CD14-positive monocyte (primary cell): ENCODE measurements at regions of chr5 and their contacts with region 1.

Region 1: GRCh38 chr5:142922223-142922952 is 152.2 kb downstream of the ARHGAP26 start:
- DNase-seq: peak in 2 of 3 donors; percentile 37 to 41
- H3K4me3 ChIP-seq: no peak overlapping the region
- H3K4me3 Mint-ChIP-seq: no peak overlapping the region
- H3K27ac ChIP-seq: no peak overlapping the region
- H3K27ac Mint-ChIP-seq: peak overlapping the region in 4 of 7 donors; percentile 28 to 62 (median 51)
- H3K4me1 ChIP-seq: peaks cover 31 to 42% of the 10 kb centered on the region in 2 donors
- H3K4me1 Mint-ChIP-seq: peaks cover 44% of the 10 kb centered on the region
- H3K27me3 ChIP-seq: no peaks in the 10 kb centered on the region
- H3K27me3 Mint-ChIP-seq: peaks cover 0 to 3% (median 0%) of the 10 kb centered on the region in 3 donors
- CTCF ChIP-seq: peak; percentile 63

Region 2: DNA sequence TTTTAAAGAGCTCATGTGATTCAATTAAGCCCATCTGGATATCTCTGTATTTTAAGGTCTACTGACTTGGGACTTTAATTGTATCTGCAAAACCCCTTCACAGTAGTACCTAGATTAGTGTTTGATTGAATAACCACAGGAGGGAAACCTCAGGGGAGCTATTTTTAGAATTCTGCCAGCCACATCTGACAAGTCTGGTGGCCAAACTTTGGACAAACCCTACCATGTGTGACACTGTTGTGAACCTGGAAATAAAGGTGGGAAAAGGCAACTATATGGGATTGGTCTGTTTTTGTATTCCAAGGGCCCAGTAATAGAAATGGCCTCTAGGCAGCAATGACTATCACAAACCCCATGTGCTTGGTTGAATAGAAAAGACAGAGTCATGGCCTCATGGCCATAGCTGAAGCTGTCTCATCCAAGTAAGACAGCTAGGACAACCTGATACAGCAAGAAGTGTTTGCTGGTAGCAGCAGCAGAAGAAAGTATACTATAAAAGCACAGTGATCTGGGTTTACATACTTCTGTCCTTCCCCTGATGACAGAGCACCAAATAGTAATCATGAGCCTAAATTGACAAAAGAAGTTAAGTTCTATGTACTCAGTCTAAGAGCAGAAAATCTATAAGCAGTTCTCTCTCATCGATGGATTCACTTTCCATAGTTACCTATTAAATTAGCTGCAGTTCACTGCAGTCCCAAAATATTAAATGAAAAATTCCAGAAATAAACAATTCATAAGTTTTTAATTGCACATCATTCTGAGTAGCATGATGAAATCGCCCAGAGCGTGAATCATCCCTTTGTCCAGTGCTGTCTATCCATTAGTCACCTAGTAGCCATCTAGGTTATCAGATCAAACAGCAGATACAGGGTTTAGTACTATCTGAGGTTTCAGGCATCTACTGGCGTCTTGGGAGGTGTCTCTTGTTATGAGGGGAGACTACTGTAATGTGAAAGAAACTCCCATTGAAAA is 37.6 kb after region 1 on chr5:
- intact Hi-C with region 1: loop called in 1 of 2 experiments (anchors 5 kb)
- DNase-seq: peak; percentile 51 to 86 (median 84)
- H3K4me3 ChIP-seq: no peak overlapping the region
- H3K4me3 Mint-ChIP-seq: no peak overlapping the region
- H3K27ac ChIP-seq: peak overlapping the region in 1 of 2 donors; percentile 50
- H3K27ac Mint-ChIP-seq: peak overlapping the region; percentile 31 to 81 (median 69)
- H3K4me1 ChIP-seq: peaks cover 0 to 18% of the 10 kb centered on the region in 2 donors
- H3K4me1 Mint-ChIP-seq: peaks cover 32% of the 10 kb centered on the region
- H3K27me3 ChIP-seq: no peaks in the 10 kb centered on the region
- H3K27me3 Mint-ChIP-seq: peaks cover 0 to 4% (median 1%) of the 10 kb centered on the region in 3 donors
- CTCF ChIP-seq: no peak

Region 3: DNA sequence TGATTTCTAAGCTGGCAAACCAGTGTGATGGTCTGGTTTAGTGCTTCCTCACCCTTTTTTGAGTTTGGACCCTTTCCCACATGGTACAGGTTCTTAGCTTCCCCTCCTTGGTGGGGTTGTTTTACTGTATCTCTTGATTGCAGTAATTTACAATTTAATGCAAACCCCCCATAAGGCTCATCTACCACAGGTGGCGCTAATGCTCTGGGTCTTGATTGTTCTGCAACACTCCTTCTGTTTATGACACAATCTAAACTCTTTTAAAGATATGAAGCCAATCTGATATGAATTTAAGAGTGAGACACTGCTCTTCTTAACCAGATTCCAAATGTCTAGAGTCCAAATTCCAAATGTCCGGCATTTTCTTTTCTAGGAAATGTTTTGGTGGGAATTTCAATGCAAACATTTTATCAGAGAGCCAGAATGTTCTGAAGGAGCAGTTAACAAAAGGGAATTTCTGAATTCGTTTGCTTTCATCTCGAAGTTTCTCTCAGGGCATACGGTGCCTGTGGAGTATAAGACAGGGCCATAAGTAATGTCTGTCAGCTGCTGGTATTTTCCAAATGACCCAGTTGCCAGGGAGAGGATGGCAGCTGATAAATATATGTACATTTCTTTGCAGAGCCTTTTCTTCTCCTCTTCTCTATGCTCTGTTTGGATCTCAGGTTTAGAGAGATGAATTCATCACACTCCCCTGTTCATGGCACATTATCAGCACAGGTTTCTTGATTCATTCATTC is 94.6 kb after region 1 on chr5:
- intact Hi-C with region 1: no loop called
- DNase-seq: peak in 1 of 3 donors; percentile 38
- H3K4me3 ChIP-seq: no peak overlapping the region
- H3K4me3 Mint-ChIP-seq: no peak overlapping the region
- H3K27ac ChIP-seq: no peak overlapping the region
- H3K27ac Mint-ChIP-seq: peak overlapping the region in 1 of 7 donors; percentile 26
- H3K4me1 ChIP-seq: no peaks in the 10 kb centered on the region
- H3K4me1 Mint-ChIP-seq: peaks cover 4% of the 10 kb centered on the region
- H3K27me3 ChIP-seq: no peaks in the 10 kb centered on the region
- H3K27me3 Mint-ChIP-seq: peaks cover 0 to 2% (median 0%) of the 10 kb centered on the region in 3 donors
- CTCF ChIP-seq: peak; percentile 49

Region 4: DNA sequence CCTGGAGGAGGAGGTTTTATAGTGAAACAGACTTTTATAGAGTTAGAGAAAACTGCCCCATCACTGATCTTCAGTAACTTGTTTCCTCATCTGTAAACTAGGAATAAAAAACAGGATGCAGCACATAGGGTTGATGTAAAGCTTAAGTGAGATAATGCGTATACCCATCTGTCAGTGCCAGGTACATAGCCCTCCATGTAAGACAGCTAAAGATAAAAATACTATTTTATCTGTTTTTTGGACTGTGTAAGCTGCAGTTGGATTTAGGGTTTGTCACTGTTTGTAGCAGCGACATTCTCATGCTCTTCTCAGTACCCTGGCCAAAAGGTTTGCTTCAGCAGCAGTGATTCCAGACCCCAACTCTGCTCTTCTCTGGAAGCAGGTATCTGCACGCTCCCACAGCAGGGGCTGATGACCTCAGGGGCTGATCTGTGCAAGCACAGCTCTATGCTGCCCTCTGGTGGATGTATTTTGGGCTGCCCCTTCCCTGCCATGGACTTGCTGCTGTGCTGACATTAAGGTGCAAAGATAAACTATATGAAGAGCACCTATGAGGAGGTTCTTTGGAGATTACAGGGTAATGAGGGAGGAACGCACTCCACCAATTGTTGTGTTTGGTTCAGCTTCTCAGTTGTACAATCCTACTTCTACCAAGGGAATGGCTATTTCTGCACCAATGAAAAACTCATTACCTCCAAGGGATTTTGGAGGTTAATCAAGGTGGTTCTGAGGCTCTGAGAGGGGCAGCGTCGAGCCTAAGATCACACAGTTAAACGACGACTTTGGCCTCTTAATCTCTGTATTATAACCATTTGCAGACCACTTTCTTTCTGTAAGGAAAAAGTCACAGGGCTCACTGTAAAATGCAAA is 902.7 kb after region 1 on chr5:
- intact Hi-C with region 1: loop called in 1 of 2 experiments (anchors 10 kb)
- DNase-seq: peak; percentile 51 to 73 (median 70)
- H3K4me3 ChIP-seq: no peak overlapping the region
- H3K4me3 Mint-ChIP-seq: no peak overlapping the region
- H3K27ac ChIP-seq: no peak overlapping the region
- H3K27ac Mint-ChIP-seq: no peak overlapping the region
- H3K4me1 ChIP-seq: no peaks in the 10 kb centered on the region
- H3K4me1 Mint-ChIP-seq: no peaks in the 10 kb centered on the region
- H3K27me3 ChIP-seq: no peaks in the 10 kb centered on the region
- H3K27me3 Mint-ChIP-seq: no peaks in the 10 kb centered on the region
- CTCF ChIP-seq: peak; percentile 93